Right ventricle myocardium superior (tissue), 1 donor: ENCODE measurements at regions of chr1 and their contacts with region 1.

Region 1: GRCh38 chr1:108828022-108828961 is 28.6 kb downstream of the AKNAD1 start:
- DNase-seq: peak; percentile 85
- ATAC-seq: peak; percentile 71

Region 2: GRCh38 chr1:108503076-108503740 is 325.1 kb before region 1 on chr1:
- intact Hi-C with region 1: no loop called
- DNase-seq: no peak
- ATAC-seq: no peak

Region 3: DNA sequence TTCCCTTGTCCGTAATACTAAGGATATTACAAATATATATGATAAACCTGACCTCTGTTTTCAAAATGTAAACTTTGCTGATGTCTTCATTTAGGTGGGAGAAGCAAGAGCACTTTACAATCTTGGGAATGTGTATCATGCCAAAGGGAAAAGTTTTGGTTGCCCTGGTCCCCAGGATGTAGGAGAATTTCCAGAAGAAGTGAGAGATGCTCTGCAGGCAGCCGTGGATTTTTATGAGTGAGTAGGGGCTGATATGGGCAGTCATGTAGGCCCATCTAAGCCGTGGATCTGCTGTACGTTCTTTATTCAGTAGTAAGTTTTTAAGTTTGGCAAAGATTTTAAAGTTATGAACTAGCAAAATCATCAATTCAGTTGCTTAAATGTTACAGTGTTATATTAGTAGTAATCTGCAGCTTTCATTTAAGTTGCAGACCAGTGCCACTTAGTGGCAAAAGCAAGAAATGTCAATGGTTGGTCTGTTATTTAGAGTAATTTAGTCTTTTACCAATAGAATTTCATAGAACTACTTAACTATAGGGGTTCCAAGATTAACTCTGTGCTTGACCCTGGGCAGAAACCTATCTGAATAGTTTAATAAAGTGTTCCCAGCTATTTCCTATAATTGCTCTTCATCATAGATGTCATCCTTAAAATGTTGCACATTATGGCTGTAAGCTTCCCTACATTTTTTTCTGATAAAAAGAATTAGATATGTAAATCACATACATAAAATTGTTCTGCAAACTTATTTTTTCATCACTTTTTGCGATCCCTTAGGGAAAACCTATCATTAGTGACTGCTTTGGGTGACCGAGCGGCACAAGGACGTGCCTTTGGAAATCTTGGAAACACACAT is 69.8 kb after region 1 on chr1:
- intact Hi-C with region 1: loop called (anchors 2 kb)
- DNase-seq: no peak
- ATAC-seq: peak; percentile 88